ENCODE measurements at regions of chr17 and their contacts with region 1.

Region 1: DNA sequence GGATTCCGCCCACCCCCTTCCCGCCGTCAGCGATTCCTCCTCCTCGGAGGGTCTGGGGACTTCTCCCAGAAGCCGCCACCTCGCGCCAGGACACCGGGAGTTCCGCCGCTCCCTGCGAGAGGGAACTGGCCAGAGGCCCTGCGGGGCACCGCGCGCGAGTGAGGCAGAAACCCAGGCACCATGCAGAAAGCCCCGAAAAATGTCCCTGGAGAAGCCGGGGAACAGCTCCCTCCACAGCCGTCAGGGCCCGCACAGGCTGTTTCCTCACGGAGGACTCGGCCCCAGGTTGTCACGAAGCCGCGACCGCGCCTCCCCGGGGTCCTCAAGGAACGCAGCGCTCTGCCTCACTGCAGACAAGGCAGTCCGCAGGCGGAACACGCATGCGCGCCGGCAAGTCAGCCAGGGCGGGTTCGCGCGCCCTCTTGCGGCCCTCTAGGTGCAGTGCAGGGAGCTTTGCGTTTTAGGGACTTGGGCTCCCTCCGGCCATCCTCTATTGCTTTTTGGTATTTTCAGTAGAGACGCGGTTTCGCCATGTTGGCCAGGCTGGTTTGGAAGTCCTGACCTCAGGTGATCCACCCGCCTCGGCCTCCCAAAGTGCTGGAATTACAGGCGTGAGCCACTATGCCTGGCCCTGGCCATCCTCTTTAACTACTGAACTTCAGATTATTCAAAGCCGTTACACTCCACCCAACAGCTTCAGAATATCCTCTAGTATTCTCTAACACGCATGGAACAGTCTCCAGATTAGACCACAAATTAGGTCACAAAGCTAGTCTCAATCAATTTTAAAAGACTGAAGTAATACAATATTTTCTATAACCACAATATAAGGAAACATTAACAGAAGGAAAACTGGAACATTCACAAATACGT is 20.3 kb upstream of the ZNF287 start:
- DNase-seq: peak; percentile 88 to 92 (median 90)
- H3K4me3 ChIP-seq: peak overlapping the region; percentile 19 to 68
- H3K4me3 Mint-ChIP-seq: peak overlapping the region; percentile 65 to 87 (median 80)
- H3K27ac ChIP-seq: no peak overlapping the region
- H3K27ac Mint-ChIP-seq: peak overlapping the region in 4 of 7 donors; percentile 30 to 75 (median 42)
- H3K4me1 ChIP-seq: peaks cover 12% of the 10 kb centered on the region
- H3K4me1 Mint-ChIP-seq: peaks cover 3 to 11% (median 8%) of the 10 kb centered on the region in 4 donors
- H3K27me3 ChIP-seq: no peaks in the 10 kb centered on the region
- H3K27me3 Mint-ChIP-seq: peaks cover 6 to 14% of the 10 kb centered on the region in 2 donors

Region 2: DNA sequence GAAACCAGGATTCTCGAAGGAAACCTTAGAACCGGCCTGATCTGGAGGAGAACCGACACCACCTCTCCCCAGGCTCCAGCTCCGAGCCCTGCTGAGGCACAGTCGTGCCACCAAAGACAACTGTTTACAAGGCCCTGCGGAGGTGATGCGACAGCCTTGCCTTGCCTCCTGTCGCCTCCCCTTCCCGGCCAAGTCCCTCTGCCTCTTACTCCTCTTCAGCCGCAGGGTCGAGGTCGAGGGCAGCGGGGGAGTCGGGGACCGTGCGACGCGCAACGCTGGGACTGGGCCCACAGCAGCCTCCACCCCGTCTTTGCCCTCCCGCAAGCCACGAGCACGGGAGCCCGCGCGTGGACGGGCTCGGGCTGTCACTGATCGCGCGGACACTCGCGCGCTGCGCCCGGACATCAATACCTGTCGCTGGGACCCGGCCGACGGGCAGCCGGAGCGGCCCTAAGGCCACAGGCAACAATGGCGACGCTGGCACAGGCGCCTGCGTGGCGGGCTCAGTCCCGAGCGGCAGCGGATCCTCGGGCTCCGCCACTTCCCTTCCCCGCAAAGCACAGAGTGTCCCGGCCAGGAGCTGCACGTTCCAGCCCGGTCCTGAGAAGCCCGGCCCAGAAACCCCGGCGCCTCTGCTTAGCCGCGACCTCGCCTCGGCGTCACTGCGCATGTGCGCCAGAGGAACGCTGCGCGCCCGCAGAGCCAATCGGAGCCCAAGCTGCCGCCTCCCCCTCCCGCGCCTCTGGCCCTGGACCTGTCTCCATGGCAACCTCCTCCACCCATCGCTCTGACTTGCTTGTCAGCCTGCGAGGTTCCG is 20.6 kb before region 1 on chr17 and contains the start of gene ZNF287:
- CTCF ChIA-PET with region 1: interaction called, 64 read pairs
- POLR2A ChIA-PET with region 1: interaction called, 7 read pairs
- intact Hi-C with region 1: loop called (anchors 1 kb)
- DNase-seq: peak; percentile 91 to 96 (median 93)
- H3K4me3 ChIP-seq: peak within 1 kb of the TSS; percentile 33 to 87
- H3K4me3 Mint-ChIP-seq: peak within 1 kb of the TSS; percentile 85 to 89 (median 86)
- H3K27ac ChIP-seq: peak within 1 kb of the TSS; percentile 38
- H3K27ac Mint-ChIP-seq: peak within 1 kb of the TSS; percentile 79 to 98 (median 96)
- H3K4me1 ChIP-seq: peaks cover 14% of the 10 kb centered on the region
- H3K4me1 Mint-ChIP-seq: peaks cover 8 to 19% (median 12%) of the 10 kb centered on the region in 4 donors
- H3K27me3 ChIP-seq: no peaks in the 10 kb centered on the region
- H3K27me3 Mint-ChIP-seq: peaks cover 2 to 3% of the 10 kb centered on the region in 2 donors
- total RNA-seq, gene ZNF287: 16.7 to 17.9 TPM

Region 3: GRCh38 chr17:16653209-16654041 is 64.1 kb after region 1 on chr17 and contains the start of gene ZNF624:
- CTCF ChIA-PET with region 1: interaction called, 3 read pairs
- POLR2A ChIA-PET with region 1: interaction called, 3 read pairs
- intact Hi-C with region 1: loop called (anchors 2 kb)
- DNase-seq: peak; percentile 81 to 85 (median 83)
- H3K4me3 ChIP-seq: peak within 1 kb of the TSS; percentile 60 to 82
- H3K4me3 Mint-ChIP-seq: peak within 1 kb of the TSS; percentile 73 to 90 (median 86)
- H3K27ac ChIP-seq: peak within 1 kb of the TSS; percentile 69
- H3K27ac Mint-ChIP-seq: peak within 1 kb of the TSS; percentile 3 to 88 (median 79)
- H3K4me1 ChIP-seq: peaks cover 15% of the 10 kb centered on the region
- H3K4me1 Mint-ChIP-seq: peaks cover 17 to 25% (median 21%) of the 10 kb centered on the region in 4 donors
- H3K27me3 ChIP-seq: no peaks in the 10 kb centered on the region
- H3K27me3 Mint-ChIP-seq: peaks cover 2 to 6% of the 10 kb centered on the region in 2 donors
- total RNA-seq, gene ZNF624: 11.5 to 12.0 TPM